Posterior vena cava (tissue), 2 donors: ENCODE measurements at regions of chr11 and their contacts with region 1.

Region 1: GRCh38 chr11:76885390-76886097 is 24.8 kb downstream of the ACER3 start:
- DNase-seq: no peak

Region 2: GRCh38 chr11:76419896-76420295 is 465.6 kb before region 1 on chr11:
- intact Hi-C with region 1: loop called in 1 of 2 experiments (anchors 5 kb)
- DNase-seq: no peak

Region 3: GRCh38 chr11:76835928-76836612 is 49.5 kb before region 1 on chr11:
- intact Hi-C with region 1: no loop called
- DNase-seq: no peak

Region 4: DNA sequence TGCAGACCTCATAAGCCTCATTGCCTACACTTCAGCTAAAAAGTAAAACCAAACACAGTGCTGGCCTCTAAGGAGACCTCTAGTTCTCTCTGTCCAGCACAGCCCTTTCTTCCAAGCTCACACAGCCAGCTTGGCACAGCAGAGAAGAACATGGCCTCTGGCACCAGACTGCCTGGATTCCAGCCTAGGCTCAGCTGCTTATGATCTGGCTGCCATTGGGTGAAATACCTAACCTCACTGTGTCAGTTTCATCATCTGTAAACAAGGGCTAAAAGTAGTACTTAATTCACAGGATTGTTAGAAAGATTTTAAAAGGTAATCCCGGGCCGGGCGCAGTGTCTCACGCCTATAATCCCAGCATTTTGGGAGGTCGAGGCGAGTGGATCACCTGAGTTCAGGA is 34.7 kb before region 1 on chr11:
- intact Hi-C with region 1: no loop called
- DNase-seq: no peak